Heart left ventricle (tissue), 16 donors: ENCODE measurements at regions of chr9 and their contacts with region 1.

Region 1: GRCh38 chr9:33239921-33240320 is at the start of gene SPINK4:
- DNase-seq: peak in 3 of 5 donors; percentile 35 to 39 (median 35)
- ATAC-seq: peak; percentile 28 to 76 (median 54)
- H3K4me3 ChIP-seq: no peak within 1 kb of the TSS
- H3K27ac ChIP-seq: no peak within 1 kb of the TSS
- H3K4me1 ChIP-seq: peaks cover 0 to 11% (median 7%) of the 10 kb centered on the region in 12 donors
- H3K27me3 ChIP-seq: no peaks in the 10 kb centered on the region
- CTCF ChIP-seq: no peak
- POLR2A ChIP-seq: no peak
- total RNA-seq, gene SPINK4: not detected

Region 2: GRCh38 chr9:32968101-32969011 is 271.6 kb before region 1 on chr9:
- intact Hi-C with region 1: no loop called
- DNase-seq: peak in 2 of 5 donors; percentile 29 to 32
- ATAC-seq: peak in 1 of 4 donors; percentile 29
- H3K4me3 ChIP-seq: no peak overlapping the region
- H3K27ac ChIP-seq: no peak overlapping the region
- H3K4me1 ChIP-seq: peaks cover 0 to 10% (median 0%) of the 10 kb centered on the region in 12 donors
- H3K27me3 ChIP-seq: no peaks in the 10 kb centered on the region
- CTCF ChIP-seq: peak; percentile 80 to 94 (median 88)
- POLR2A ChIP-seq: no peak

Region 3: DNA sequence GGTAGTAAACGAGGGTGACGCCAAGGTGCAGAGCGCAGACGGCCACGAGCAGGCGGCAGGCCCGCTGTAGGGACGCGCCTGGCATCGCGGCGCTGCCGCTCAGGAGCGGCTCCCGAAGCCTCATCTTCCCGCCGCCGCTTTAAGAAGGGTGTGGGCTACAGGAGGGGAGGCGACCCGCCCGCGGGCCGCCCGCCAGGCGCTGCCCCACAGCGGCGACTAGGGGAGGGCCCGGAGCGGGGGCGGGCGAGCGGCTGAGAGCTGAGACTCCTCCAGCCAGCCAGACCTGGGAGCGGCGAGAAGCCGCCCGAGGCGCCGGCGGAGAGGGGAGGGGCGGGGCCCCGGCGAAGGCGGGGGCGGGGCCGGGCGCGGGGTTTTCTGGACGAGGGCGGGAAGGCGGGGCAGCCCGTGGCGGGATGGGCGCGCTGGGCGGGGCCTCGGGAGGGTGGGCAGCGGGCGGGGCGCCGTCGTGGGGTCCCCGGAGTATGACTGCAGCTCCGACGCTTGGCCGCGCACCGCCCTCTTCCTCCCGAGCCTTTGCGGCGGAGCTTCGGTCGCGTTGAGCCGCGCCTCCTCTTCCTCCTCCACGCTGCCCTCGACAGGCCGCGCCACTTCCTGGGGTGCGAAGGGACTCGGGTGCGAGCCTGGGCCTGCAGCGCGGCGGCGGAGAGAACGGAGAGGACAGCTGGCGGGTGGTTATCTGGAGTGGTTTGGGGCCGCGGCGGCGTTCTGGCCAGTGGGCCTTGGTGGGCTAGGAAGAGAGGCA is 72.7 kb before region 1 on chr9 and contains the start of gene B4GALT1:
- intact Hi-C with region 1: no loop called
- DNase-seq: peak; percentile 96 to 99 (median 97)
- ATAC-seq: peak; percentile 39 to 90 (median 71)
- H3K4me3 ChIP-seq: peak within 1 kb of the TSS; percentile 65 to 100 (median 91)
- H3K27ac ChIP-seq: peak within 1 kb of the TSS; percentile 96 to 100 (median 99)
- H3K4me1 ChIP-seq: peaks cover 13 to 63% (median 43%) of the 10 kb centered on the region in 12 donors
- H3K27me3 ChIP-seq: no peaks in the 10 kb centered on the region
- CTCF ChIP-seq: peak in 4 of 12 donors; percentile 12 to 35 (median 18)
- POLR2A ChIP-seq: peak; percentile 76 to 96
- total RNA-seq, gene B4GALT1: 27.4 to 73.3 (median 44.8) TPM

Region 4: DNA sequence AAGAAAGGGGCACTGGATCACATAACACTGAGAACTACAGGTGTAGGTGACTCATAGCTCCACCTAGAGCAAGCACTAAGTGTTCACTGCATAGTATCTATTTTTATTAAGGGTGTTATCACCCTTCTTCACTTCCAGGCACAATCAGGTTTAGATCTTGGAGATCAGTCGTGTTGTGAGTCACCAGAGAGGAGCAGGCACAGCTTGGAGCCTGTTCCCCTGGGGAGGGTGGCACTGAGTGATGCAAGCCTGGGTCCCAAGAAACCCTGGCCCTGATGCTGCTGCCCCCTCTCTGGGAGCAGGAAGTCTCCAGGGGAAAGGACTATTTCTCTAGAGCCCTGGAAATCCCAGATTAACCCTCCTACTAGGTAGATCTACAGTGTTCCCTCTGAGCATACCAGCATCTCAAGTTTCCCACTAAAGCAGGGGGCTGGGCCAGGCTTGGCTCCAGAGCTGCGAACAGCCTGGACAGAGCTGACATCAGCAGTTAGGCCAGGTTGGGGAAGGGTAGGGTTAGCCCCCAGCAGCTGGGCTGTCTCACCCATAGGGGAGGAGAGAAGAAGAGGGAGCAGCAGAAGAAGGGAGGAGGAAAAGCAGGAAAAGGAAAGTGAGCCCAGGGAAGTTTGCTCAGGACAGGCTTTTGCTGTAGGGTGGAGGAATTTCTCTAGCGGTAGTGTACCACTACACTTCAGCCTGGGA is 28.1 kb before region 1 on chr9:
- intact Hi-C with region 1: loop called in 1 of 10 experiments (anchors 2 kb)
- DNase-seq: no peak
- ATAC-seq: peak in 2 of 4 donors; percentile 26 to 31
- H3K4me3 ChIP-seq: no peak overlapping the region
- H3K27ac ChIP-seq: no peak overlapping the region
- H3K4me1 ChIP-seq: no peaks in the 10 kb centered on the region
- H3K27me3 ChIP-seq: no peaks in the 10 kb centered on the region
- CTCF ChIP-seq: no peak
- POLR2A ChIP-seq: no peak